ENCODE measurements at regions of chr14 and their contacts with region 1.

Region 1: GRCh38 chr14:61125867-61126572 is 145.0 kb downstream of the SLC38A6 start:
- DNase-seq: peak; percentile 87 to 96
- ATAC-seq: peak; percentile 48 to 50
- H3K4me3 ChIP-seq: peak overlapping the region; percentile 1 to 31 (median 17)
- H3K27ac ChIP-seq: peak overlapping the region; percentile 94 to 99 (median 98)
- H3K4me1 ChIP-seq: peaks cover 70 to 75% of the 10 kb centered on the region in 2 donors
- H3K27me3 ChIP-seq: no peaks in the 10 kb centered on the region
- CTCF ChIP-seq: no peak
- POLR2A ChIP-seq: no peak

Region 2: GRCh38 chr14:60164712-60165546 is 961.1 kb before region 1 on chr14 and contains the start of gene DHRS7:
- in situ Hi-C with region 1: no loop called
- intact Hi-C with region 1: loop called (anchors 5 kb)
- DNase-seq: peak; percentile 72 to 83
- ATAC-seq: peak; percentile 42
- H3K4me3 ChIP-seq: peak within 1 kb of the TSS; percentile 81 to 95 (median 92)
- H3K27ac ChIP-seq: peak within 1 kb of the TSS; percentile 97 to 100 (median 99)
- H3K4me1 ChIP-seq: peaks cover 33 to 52% of the 10 kb centered on the region in 2 donors
- H3K27me3 ChIP-seq: no peaks in the 10 kb centered on the region
- CTCF ChIP-seq: peak in 4 of 5 experiments; percentile 32 to 68 (median 40)
- POLR2A ChIP-seq: peak; percentile 71 to 88
- total RNA-seq, gene DHRS7: 937 to 2,179 (median 1,242) TPM

Region 3: GRCh38 chr14:60248697-60249318 is 877.2 kb before region 1 on chr14 and contains the start of gene PPM1A:
- in situ Hi-C with region 1: no loop called
- intact Hi-C with region 1: loop called (anchors 10 kb)
- DNase-seq: peak; percentile 90 to 96
- ATAC-seq: peak; percentile 77 to 80
- H3K4me3 ChIP-seq: peak within 1 kb of the TSS; percentile 77 to 90 (median 88)
- H3K27ac ChIP-seq: peak within 1 kb of the TSS; percentile 97 to 100 (median 100)
- H3K4me1 ChIP-seq: peaks cover 35 to 38% of the 10 kb centered on the region in 2 donors
- H3K27me3 ChIP-seq: no peaks in the 10 kb centered on the region
- CTCF ChIP-seq: peak in 1 of 5 experiments; percentile 21
- POLR2A ChIP-seq: peak; percentile 83 to 95
- total RNA-seq, gene PPM1A: 81.2 to 107 (median 86.1) TPM

Region 4: DNA sequence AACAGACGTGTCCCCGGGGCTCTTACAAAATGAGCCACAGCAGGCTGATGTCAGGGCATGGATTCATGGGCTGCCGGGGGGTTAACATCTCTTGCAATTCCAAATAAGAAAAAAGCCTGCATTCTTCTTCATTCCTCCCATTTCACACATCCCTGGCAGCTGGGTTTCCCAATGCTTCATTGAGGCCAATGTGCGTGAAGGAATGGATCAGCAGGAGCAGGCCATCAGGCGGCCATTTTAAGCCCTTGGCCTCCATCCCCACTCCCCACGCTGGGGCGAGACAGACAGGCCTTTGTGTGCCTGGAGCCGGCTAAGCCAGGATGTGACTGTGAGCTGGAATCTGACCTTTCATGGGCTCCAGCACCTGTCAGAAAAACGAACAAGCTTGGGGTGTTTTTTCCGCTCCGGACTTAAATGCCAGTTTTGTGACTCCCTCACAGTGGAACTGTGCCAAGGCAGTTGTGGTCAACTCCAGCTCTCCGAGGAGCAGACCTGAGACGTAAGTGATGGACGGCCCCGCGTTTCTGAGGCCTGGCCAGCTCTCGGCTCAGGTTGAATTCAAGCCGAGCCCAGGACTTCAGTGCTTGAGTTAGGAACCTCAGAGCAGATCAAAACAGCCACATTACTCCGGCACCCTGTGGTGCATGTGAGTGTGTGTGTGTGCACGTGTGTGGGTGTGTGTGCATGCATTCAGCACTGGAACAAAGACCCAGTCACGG is 22.0 kb after region 1 on chr14:
- in situ Hi-C with region 1: no loop called
- intact Hi-C with region 1: loop called (anchors 2 kb)
- DNase-seq: peak; percentile 77 to 89
- ATAC-seq: peak; percentile 44 to 65
- H3K4me3 ChIP-seq: peak overlapping the region in 3 of 4 donors; percentile 3 to 27 (median 16)
- H3K27ac ChIP-seq: peak overlapping the region; percentile 84 to 95 (median 88)
- H3K4me1 ChIP-seq: peaks cover 35 to 43% of the 10 kb centered on the region in 2 donors
- H3K27me3 ChIP-seq: no peaks in the 10 kb centered on the region
- CTCF ChIP-seq: no peak
- POLR2A ChIP-seq: no peak

Measured in gastrocnemius medialis (tissue), 4 donors.